ENCODE measurements at regions of chr1 and their contacts with region 1.

Region 1: GRCh38 chr1:165397944-165398343 is 41.4 kb upstream of the LMX1A start:
- DNase-seq: no peak
- H3K4me3 ChIP-seq: no peak overlapping the region
- H3K27ac ChIP-seq: no peak overlapping the region
- H3K4me1 ChIP-seq: no peaks in the 10 kb centered on the region
- H3K27me3 ChIP-seq: no peaks in the 10 kb centered on the region
- CTCF ChIP-seq: no peak
- POLR2A ChIP-seq: no peak

Region 2: DNA sequence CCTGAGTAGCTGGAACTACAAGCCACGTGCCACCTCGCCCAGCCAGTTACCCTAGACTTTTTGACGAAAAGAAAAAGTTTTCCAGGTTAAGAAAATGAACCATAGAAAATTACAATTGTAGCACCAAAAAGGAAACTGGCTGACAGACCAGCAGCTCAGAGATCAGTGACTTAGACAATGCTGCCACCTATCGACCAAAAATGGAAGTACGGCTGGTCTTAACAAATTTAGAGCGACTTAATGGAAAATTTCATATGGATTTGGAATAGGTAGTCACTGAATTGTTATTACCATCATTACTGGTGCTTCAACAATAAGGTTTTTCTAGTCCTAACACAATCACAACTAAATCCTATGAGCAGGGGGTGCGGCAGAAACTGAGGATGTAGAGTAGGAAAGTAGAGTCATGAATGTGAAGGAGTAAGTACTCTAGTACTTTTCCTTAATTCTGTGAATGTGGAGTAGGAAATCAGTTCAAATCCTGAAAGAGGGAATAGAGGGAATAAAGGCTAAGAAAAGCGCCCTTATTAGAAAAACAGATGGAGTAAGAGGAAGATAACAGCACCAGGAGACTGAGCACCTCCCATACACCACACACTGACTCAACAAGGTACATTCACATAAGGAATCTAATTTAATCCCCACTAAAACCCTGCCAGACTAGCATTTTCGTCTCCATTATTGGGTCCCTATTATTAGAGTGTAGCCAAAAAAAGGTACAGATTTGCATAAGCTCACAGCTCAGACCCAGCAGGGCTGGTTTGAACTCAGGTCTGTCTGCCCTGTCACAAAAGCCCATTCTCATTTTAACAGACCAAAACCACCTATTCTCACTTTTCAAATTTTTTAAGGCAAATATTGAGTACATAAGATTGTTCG is 195.2 kb after region 1 on chr1:
- intact Hi-C with region 1: loop called (anchors 5 kb)
- DNase-seq: peak; percentile 66 to 78
- H3K4me3 ChIP-seq: no peak overlapping the region
- H3K27ac ChIP-seq: no peak overlapping the region
- H3K4me1 ChIP-seq: no peaks in the 10 kb centered on the region
- H3K27me3 ChIP-seq: no peaks in the 10 kb centered on the region
- CTCF ChIP-seq: peak; percentile 91 to 94 (median 94)
- POLR2A ChIP-seq: no peak

Region 3: DNA sequence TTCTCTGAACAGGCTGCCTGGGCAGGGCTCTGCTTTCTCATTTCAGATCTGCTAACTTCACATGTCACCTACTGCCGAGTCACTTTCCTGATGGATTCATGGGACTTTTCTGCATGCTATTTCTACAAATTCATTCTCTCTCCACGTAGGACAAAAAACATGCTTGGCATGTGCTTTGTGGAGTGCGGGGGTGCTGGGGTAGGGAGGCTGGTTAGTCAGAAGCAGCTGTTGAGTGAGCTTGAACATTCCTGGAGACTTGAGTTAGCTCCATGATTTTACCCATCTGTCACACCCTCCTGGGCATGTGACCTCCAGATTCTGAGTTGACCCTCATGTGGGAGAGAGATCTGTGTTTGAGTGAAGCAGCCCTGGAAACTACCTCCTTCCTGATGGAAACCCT is 500.9 kb after region 1 on chr1:
- intact Hi-C with region 1: no loop called
- DNase-seq: peak; percentile 32 to 36
- H3K4me3 ChIP-seq: no peak overlapping the region
- H3K27ac ChIP-seq: peak overlapping the region; percentile 58 to 79
- H3K4me1 ChIP-seq: peaks cover 0 to 13% of the 10 kb centered on the region in 2 donors
- H3K27me3 ChIP-seq: no peaks in the 10 kb centered on the region
- CTCF ChIP-seq: no peak
- POLR2A ChIP-seq: no peak

Measured in uterus (tissue), 4 donors.